Cardiac septum (tissue), 1 donor: ENCODE measurements at regions of chrX and their contacts with region 1.

Region 1: DNA sequence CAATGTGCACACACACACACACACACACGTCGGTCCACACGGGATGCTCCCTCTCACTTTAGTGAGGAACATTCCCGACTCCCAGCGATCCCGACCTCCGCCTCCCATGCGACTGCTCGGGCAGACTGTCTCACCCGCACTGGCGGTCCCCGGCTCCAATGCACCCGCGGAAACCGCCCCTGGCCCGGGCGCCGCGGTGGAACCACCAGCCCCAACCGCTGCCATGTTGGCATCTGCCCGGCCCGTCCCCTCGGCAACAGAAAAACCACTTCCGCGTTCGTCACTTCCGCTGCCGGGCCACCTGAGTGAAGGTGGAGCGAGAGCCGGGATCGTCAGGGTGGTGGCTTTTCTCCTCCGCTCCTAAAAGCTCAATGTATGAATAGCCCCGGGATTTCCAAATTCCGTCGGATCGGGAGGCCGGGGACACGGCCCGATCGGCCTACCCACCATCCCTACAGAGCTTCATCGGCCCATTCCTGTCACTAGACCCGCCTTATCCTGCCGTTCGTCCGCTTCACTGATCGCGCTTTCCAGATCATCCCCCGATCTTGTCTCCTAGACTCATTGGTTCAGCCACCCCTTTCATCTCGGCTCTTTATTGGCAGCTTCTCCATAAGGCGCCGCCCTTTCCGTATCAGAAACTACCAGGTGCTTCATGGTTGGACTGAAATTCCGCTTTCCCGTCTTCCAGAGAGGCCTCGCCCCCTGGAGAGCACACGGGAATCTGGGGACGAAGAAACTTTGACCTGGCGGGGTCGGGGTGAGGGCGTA is at the start of gene SLC35A2:
- DNase-seq: peak; percentile 94
- total RNA-seq, gene SLC35A2: 13.0 TPM

Region 2: DNA sequence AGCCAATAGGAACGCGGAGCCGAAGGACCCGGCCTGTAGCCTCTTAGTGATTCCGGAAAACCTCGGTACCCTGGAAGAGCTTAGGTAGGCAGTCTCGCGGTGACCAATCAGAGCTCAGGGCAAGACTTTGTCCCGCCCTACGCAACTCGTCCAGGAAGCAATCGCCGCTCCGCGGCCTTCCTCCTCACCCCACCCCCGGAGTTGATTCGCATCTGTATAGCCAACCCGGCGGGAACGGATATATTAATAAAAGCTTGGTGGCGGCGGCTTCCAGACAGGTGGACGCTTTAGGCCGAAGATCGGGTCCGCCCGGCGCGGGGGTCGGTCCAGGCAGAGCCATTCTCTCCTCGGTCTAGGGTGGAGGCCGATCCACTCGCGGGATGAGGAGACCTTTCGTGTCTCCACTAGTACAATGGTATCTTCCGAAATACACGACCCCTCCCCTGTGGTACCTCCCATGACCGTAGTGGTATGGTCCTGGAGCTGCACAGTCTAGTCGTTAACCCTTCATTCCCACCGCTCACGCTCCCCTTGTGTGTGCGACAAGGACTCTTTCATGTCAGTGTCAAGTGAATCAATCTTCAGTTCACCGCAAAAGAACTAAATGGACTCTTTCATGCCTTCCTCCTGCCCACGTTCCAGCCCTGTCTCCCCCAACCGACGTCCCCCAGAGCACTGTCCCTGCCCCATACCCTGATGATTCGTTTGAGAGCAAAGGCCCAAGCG is 174.2 kb before region 1 on chrX:
- intact Hi-C with region 1: loop called (anchors 5 kb)
- DNase-seq: peak; percentile 94